ENCODE measurements at regions of chr13 and their contacts with region 1.

Region 1: DNA sequence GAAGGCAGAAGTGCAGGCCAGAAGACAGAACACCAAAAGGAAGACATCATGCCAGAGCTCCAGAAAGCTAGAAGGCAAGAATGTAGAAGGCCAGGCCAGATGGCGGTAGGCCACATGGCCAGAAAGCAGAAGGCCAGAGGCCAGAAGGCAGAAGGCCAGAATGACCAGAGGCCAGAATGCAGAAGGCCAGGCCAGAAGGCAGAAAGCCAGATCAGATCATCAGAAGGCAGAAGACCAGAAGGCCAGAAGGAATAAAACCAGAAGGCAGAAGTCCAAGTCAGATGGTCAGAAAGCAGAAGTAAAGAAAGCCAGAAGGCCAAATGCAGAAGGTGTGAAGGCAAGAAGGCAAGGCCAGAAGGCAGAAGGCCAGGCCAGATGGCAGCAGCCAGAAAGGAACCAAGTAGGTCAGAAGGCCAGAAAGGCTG is 185.0 kb downstream of the TUBA3C start:
- DNase-seq: no peak
- ATAC-seq: no peak
- H3K4me3 ChIP-seq: no peak overlapping the region
- H3K27ac ChIP-seq: no peak overlapping the region
- H3K4me1 ChIP-seq: no peaks in the 10 kb centered on the region
- H3K27me3 ChIP-seq: no peaks in the 10 kb centered on the region
- CTCF ChIP-seq: no peak
- EP300 ChIP-seq: no peak
- POLR2A ChIP-seq: no peak
- RAD21 ChIP-seq: no peak

Region 2: GRCh38 chr13:18943721-18944391 is 52.8 kb before region 1 on chr13:
- CTCF ChIA-PET with region 1: no interaction called
- POLR2A ChIA-PET with region 1: no interaction called
- RAD21 ChIA-PET with region 1: no interaction called
- SMC1A ChIA-PET with region 1: no interaction called
- in situ Hi-C with region 1: loop called (anchors 10 kb)
- intact Hi-C with region 1: no loop called
- DNase-seq: no peak
- ATAC-seq: no peak
- H3K4me3 ChIP-seq: no peak overlapping the region
- H3K27ac ChIP-seq: no peak overlapping the region
- H3K4me1 ChIP-seq: no peaks in the 10 kb centered on the region
- H3K27me3 ChIP-seq: no peaks in the 10 kb centered on the region
- CTCF ChIP-seq: no peak
- EP300 ChIP-seq: no peak
- POLR2A ChIP-seq: no peak
- RAD21 ChIP-seq: no peak

Region 3: GRCh38 chr13:18964942-18965341 is 31.7 kb before region 1 on chr13:
- CTCF ChIA-PET with region 1: no interaction called
- POLR2A ChIA-PET with region 1: no interaction called
- RAD21 ChIA-PET with region 1: no interaction called
- SMC1A ChIA-PET with region 1: no interaction called
- in situ Hi-C with region 1: loop called (anchors 5 kb)
- intact Hi-C with region 1: no loop called
- DNase-seq: no peak
- ATAC-seq: no peak
- H3K4me3 ChIP-seq: no peak overlapping the region
- H3K27ac ChIP-seq: no peak overlapping the region
- H3K4me1 ChIP-seq: no peaks in the 10 kb centered on the region
- H3K27me3 ChIP-seq: no peaks in the 10 kb centered on the region
- CTCF ChIP-seq: no peak
- EP300 ChIP-seq: no peak
- POLR2A ChIP-seq: no peak
- RAD21 ChIP-seq: no peak